ENCODE measurements at regions of chr15 and their contacts with region 1.

Region 1: GRCh38 chr15:71853543-71853942 is 43.2 kb downstream of the NR2E3 start:
- DNase-seq: no peak
- H3K4me3 Mint-ChIP-seq: no peak overlapping the region
- H3K27ac Mint-ChIP-seq: no peak overlapping the region
- H3K4me1 Mint-ChIP-seq: no peaks in the 10 kb centered on the region
- H3K27me3 Mint-ChIP-seq: no peaks in the 10 kb centered on the region
- CTCF ChIP-seq: no peak

Region 2: DNA sequence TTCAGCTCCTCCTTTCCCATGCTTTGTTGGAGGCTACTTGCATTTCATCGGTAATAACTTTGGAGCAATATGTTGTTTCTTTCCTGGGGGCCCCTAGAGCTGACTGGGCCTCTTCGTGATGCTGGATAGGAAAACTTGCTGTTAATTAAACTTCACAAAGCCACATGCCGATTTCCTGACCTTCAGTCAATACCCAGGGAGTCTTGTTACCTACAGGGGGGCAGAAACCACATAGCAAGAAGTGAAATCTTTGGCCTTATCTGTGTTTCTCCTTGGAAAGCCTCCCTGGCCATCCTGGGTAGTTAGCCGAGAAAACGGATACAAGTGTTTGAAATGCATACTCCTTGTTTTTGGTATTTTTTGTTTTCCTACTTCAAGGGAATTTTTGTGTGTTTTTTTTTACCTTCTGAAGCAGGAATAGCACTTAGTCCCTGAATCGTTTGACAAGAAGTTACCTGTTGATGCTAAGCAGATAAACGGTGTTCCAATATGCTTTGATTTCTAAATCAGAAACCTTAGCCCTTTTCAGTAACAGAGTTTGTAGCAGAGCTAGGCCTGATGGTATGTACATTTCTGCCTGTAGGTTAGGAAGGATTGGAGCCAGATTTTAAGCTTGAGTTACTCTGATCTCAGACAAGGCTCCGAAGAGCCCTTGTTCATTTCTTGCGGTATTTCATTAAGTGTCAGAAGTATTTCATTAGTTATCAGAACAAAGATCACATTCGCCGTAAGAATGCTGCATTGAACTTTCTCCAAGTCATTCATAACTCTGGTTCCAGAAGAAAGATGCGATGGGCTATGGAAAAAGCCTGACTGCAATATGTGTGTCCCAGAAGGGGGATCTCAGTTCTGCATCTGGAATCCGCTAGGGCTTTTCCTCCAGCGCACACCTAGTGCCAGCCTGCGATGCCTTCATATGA is 626.7 kb before region 1 on chr15:
- CTCF ChIA-PET with region 1: interaction called, 11 read pairs
- intact Hi-C with region 1: no loop called
- DNase-seq: no peak
- H3K4me3 Mint-ChIP-seq: no peak overlapping the region
- H3K27ac Mint-ChIP-seq: no peak overlapping the region
- H3K4me1 Mint-ChIP-seq: no peaks in the 10 kb centered on the region
- H3K27me3 Mint-ChIP-seq: no peaks in the 10 kb centered on the region
- CTCF ChIP-seq: no peak

Region 3: DNA sequence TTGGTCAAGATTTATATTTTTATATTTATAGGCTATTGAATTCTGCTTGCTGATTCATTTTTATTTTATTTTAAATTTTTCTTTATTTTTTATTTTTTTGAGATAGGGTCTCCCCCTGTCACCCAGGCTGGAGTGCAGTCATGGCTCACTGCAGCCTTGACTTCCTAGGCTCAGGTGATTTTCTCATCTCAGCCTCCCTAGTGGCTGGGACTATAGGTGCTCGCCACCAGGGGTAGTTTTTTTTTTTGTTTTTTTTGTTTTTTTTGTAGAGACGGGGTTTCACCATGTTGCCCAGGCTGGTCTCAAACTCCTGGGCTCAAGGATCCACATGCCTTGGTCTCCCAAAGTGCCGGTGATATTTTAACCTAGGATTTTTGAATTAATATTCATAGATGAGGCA is 12.0 kb before region 1 on chr15:
- CTCF ChIA-PET with region 1: no interaction called
- intact Hi-C with region 1: no loop called
- DNase-seq: no peak
- H3K4me3 Mint-ChIP-seq: no peak overlapping the region
- H3K27ac Mint-ChIP-seq: no peak overlapping the region
- H3K4me1 Mint-ChIP-seq: no peaks in the 10 kb centered on the region
- H3K27me3 Mint-ChIP-seq: no peaks in the 10 kb centered on the region
- CTCF ChIP-seq: no peak